OCI-LY7 (cell line): ENCODE measurements at regions of chr1 and their contacts with region 1.

Region 1: DNA sequence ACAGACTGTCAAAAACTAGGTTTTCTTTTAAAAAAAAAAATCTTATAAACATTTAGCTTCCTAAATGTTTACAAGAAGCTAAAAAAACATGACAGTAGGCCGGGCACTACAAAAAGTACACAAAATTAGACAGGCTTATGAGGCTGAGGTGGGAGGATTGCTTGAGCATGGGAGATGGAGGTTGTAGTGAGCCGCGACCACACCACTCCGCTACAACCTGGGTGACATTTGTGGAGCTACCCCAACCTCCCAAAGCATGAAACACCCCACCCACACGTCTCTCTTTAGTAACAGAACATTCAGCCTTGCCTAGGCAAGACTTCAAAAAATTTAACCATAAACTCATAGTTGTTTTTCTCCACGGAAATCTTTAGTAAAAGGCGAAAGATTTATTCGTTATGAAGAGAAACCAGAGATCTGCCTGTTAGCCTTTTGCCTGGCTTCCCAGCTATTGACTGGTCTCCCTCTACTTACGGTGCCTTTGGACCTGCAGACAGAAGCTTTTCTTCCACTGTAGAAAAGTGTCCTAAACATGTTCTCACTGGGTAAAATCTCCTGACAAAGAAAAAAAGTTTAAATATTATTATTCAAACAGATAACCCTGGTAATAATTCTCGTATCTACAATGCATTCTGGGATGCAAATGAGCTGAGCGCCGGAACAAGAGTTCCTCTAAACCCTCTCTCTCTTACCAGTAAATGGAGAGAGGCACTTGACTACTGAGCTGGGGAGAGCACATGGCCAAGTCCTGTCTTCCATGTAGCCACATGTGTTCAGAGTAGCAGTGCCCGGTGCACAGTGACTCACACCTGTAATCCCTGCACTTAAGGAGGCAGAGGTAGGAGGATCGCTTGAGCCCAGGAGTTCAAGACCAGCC is 9.2 kb downstream of the RNU5D-1 start:
- DNase-seq: peak; percentile 97
- H3K4me3 ChIP-seq: no peak overlapping the region
- H3K27ac ChIP-seq: peak overlapping the region; percentile 89
- H3K4me1 ChIP-seq: peaks cover 64% of the 10 kb centered on the region
- CTCF ChIP-seq: no peak

Region 2: DNA sequence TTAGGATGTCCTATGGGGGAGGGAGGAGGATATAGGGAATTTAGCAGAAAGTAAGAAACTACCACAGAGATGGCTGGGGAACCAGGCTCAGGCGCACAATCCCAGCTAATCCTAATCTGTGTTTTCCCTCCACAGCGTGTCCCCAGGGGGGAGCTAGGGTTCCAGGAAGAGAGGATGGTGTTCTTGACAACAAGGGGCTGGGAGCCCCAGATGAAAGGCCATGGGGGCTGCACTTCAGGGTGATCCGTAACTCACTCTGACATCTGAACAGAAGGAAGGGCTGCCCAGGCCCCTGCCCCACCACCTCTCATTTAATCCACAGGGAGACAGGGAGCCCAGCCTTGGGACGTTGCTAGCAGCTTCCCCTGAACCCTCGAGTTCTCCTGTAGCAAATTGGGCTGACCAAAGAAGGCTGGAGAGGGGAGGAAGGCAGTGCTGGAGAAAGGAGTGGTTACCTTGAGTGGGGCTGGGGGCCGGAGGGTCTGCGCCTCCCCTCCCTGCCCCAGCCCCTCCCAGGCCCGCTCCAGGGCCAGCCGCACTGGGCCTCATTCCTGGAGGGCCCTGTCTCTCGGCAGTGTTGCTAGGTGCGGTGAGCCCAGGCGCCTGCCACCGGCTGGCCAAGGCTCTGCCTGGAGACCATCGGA is 179.2 kb before region 1 on chr1:
- CTCF ChIA-PET with region 1: no interaction called
- POLR2A ChIA-PET with region 1: no interaction called
- intact Hi-C with region 1: no loop called
- DNase-seq: no peak
- H3K4me3 ChIP-seq: no peak overlapping the region
- H3K27ac ChIP-seq: no peak overlapping the region
- H3K4me1 ChIP-seq: no peaks in the 10 kb centered on the region
- CTCF ChIP-seq: no peak

Region 3: GRCh38 chr1:44696789-44697345 is 24.9 kb before region 1 on chr1:
- CTCF ChIA-PET with region 1: no interaction called
- POLR2A ChIA-PET with region 1: interaction called, 69 read pairs
- intact Hi-C with region 1: no loop called
- DNase-seq: peak; percentile 73
- H3K4me3 ChIP-seq: peak overlapping the region; percentile 25
- H3K27ac ChIP-seq: peak overlapping the region; percentile 80
- H3K4me1 ChIP-seq: peaks cover 57% of the 10 kb centered on the region
- CTCF ChIP-seq: no peak

Region 4: DNA sequence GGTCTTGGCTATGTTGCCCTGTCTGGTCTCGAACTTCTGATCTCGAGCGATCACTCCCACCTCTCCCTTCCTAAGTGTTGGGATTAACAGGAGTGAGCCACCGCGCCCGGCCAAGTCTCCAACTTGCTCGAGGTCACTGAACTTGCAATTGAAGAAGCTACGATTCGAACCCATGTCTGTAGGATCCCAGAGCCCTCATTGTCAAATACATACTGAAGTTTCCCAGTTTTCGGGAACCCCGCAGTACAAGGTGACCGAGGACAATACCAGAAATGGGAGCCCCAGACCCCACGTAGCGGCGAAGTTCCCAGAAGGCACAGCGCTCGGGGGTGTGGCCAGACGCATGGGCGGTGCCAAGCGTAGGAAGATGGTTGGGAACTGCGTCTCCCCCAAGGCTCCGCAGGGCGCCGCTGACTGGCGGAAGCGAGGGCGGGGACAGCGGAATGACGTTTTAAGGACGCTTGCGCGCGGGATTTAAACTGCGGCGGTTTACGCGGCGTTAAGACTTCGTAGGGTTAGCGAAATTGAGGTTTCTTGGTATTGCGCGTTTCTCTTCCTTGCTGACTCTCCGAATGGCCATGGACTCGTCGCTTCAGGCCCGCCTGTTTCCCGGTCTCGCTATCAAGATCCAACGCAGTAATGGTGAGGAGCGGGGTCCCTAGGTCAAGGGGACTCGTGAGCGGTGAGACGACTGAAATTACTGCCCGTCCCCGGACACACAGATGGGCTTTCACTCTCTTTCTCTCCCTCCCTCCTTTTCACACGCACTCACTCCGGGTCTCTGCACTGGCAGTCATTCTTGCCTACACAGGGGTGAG is 17.8 kb after region 1 on chr1 and contains the start of gene KIF2C:
- CTCF ChIA-PET with region 1: no interaction called
- POLR2A ChIA-PET with region 1: interaction called, 12 read pairs
- intact Hi-C with region 1: no loop called
- DNase-seq: peak; percentile 98
- H3K4me3 ChIP-seq: peak within 1 kb of the TSS; percentile 98
- H3K27ac ChIP-seq: peak within 1 kb of the TSS; percentile 81
- H3K4me1 ChIP-seq: peaks cover 28% of the 10 kb centered on the region
- CTCF ChIP-seq: no peak
- total RNA-seq, gene KIF2C: 150 and 159 TPM in 2 replicates

Region 5: DNA sequence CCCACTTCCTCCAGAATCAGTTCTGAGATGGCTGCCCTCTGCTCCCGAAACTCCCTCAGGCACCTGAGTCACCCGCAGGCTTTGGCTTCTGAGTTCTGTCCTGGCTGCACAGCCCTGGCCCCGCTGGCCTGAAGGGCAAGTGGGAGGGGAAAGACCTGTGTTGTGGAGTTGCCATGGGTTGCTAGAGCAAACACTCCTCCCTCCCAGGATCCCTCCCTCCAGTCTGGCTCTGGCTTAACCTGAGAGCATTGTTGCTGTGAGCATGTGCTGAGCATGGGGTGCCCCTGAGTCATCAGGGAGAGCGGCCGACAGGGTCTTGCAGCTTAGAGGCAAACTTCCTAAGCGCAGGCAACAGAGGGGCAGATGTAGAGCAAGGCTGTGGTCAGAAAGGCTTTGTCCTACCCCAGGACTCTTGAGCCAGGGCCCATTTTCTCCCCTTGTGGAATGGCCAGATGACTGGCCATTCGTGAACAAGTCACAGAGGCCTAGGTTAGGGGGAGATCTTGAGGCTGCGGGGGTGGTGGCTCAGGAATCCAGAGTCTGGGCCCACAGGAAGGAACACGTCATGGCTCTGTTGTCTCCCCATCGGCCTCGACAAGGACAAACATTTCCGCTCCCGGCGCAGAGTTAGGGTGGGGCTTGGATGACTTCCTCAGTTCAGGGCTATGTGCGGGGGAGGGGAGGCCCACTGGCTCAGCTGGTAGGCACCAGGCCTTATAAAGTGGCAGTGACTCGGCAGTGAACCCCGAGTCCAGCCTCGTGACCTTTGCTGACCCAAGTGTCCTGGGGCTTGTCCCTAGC is 85.7 kb after region 1 on chr1 and contains the start of gene DYNLT4:
- CTCF ChIA-PET with region 1: interaction called, 3 read pairs
- POLR2A ChIA-PET with region 1: interaction called, 13 read pairs
- intact Hi-C with region 1: no loop called
- DNase-seq: peak; percentile 68
- H3K4me3 ChIP-seq: no peak within 1 kb of the TSS
- H3K27ac ChIP-seq: peak within 1 kb of the TSS; percentile 74
- H3K4me1 ChIP-seq: peaks cover 44% of the 10 kb centered on the region
- CTCF ChIP-seq: no peak
- total RNA-seq, gene DYNLT4: 1.5 TPM in 1 of 2 replicates, not detected in the other

Region 6: DNA sequence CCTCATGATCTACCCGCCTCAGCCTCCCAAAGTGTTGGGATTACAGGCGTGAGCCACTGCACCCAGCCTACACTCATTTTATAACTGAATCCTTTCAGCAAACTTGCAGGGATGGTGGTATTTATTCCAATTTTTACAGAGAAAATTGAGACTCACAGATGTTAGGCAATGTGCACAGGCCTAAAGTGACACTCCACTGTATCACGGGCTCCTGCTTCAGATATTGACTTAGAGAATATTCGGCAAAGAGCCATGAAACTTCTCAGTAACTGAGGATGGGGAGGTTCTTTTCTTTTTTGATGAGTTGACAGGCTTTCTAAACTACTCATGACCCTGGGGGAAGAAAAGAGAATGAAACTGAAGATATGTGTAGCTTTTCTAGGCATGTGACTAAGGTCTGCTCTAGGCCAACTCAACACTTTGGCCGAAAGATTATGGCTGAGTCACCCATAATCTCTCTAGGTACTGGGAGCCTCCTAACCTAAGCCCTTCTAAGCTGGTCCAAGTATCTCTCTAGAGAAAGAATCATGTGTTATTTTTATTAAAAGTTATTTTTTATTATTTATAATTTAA is 141.2 kb after region 1 on chr1:
- CTCF ChIA-PET with region 1: no interaction called
- POLR2A ChIA-PET with region 1: no interaction called
- intact Hi-C with region 1: no loop called
- DNase-seq: no peak
- H3K4me3 ChIP-seq: no peak overlapping the region
- H3K27ac ChIP-seq: no peak overlapping the region
- H3K4me1 ChIP-seq: peaks cover 10% of the 10 kb centered on the region
- CTCF ChIP-seq: no peak

Region 7: DNA sequence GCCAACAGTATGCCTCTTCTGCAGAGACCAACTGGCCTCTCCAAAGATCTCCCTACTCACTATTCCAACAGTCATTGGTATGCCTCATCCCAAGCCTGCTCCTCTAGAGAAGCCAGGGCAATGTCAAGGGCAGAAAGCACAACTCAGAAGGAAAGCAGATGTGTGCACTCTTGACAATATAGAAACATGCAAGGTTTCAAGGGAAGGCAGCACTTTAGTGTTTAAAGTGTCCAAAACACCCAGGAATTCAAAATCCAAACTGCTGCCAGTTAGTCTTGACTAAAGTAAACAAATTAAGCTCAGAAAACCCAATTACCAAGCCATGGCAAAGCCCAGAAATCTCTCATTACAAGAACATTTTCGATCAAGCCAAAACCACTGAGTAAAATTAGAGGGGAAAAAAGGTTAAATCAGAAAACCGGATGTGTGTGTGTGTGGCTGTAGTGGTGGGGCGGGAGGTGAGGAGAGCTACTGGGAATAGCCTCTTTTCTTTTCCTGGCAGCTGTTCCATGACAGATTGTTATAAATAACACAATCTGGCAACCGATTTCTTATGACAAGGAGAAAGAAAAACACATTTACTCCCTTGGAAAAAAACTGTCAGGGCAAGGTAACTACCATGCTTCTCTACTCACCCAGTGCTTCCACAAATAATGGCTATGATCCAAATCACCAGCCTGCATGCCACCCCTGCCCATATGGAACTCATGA is 225.5 kb after region 1 on chr1:
- CTCF ChIA-PET with region 1: no interaction called
- POLR2A ChIA-PET with region 1: no interaction called
- intact Hi-C with region 1: no loop called
- DNase-seq: no peak
- H3K4me3 ChIP-seq: no peak overlapping the region
- H3K27ac ChIP-seq: no peak overlapping the region
- H3K4me1 ChIP-seq: no peaks in the 10 kb centered on the region
- CTCF ChIP-seq: no peak

Region 8: DNA sequence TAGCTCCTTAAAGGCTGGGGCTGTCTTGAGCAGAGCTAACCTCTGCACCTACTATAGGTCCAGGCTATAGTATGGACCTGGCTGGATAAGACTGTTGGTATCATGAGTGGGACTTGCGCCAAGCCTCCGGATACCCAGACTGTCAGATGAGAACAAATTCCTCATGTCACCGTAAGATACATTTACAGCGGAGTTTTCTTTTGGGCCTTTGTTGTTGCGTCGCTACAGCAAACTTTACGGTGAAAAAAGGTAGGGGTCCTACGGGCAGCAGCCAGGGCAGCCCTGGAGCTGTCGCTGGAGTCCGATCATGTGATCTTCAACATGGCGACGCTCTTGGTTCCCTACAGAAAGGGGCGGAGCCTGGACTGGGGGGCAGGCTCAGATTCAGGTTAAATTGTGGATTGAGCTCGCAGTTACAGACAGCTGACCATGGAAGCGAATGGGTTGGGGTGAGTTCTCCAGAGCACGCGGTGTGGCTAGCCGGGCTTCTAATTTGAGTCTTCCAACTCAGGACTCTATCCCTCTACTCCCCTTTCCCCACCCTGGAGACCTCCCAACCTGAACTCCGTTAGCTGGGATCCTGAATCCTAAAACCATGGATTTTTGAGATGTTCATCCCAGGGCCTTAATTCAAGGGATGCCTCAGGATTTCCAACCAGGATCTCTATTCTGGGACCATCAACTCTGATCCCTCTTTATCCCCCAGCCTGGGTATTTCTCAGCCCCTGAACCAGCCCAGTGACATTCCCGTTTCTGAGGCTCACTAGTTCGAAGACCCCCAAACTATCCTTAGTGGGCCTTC is 290.3 kb after region 1 on chr1 and contains the start of gene UROD:
- CTCF ChIA-PET with region 1: interaction called, 3 read pairs
- POLR2A ChIA-PET with region 1: interaction called, 6 read pairs
- intact Hi-C with region 1: loop called (anchors 2 kb)
- DNase-seq: peak; percentile 97
- H3K4me3 ChIP-seq: peak within 1 kb of the TSS; percentile 83
- H3K27ac ChIP-seq: peak within 1 kb of the TSS; percentile 49
- H3K4me1 ChIP-seq: peaks cover 20% of the 10 kb centered on the region
- CTCF ChIP-seq: no peak
- total RNA-seq, gene UROD: 57.4 and 73.5 TPM in 2 replicates